GM18951 (cell line): ENCODE measurements at regions of chrX and their contacts with region 1.

Region 1: GRCh38 chrX:11770320-11770719 is 12.3 kb downstream of the MSL3 start:
- POLR2A ChIP-seq: peak; percentile 15

Region 2: DNA sequence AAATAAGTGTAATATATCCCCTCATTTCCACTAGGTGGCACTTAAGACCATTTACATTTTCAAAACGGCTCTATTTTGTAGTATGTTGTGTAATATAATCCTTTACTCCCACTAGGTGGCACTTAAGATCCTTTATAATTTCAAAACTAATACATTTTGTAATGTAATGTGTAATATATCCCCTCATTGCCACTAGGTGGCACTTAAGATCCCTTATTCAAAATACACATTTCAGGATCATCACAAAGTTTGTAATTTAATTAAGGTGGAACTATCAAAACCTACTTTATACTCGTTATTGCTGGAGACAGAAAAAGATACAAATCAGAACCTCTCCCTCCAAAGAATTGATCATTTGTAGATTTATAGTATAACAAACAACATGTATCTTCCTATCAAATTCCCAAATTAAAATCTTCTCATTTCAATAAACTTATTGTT is 237.1 kb before region 1 on chrX:
- in situ Hi-C with region 1: loop called (anchors 5 kb)
- POLR2A ChIP-seq: no peak

Region 3: DNA sequence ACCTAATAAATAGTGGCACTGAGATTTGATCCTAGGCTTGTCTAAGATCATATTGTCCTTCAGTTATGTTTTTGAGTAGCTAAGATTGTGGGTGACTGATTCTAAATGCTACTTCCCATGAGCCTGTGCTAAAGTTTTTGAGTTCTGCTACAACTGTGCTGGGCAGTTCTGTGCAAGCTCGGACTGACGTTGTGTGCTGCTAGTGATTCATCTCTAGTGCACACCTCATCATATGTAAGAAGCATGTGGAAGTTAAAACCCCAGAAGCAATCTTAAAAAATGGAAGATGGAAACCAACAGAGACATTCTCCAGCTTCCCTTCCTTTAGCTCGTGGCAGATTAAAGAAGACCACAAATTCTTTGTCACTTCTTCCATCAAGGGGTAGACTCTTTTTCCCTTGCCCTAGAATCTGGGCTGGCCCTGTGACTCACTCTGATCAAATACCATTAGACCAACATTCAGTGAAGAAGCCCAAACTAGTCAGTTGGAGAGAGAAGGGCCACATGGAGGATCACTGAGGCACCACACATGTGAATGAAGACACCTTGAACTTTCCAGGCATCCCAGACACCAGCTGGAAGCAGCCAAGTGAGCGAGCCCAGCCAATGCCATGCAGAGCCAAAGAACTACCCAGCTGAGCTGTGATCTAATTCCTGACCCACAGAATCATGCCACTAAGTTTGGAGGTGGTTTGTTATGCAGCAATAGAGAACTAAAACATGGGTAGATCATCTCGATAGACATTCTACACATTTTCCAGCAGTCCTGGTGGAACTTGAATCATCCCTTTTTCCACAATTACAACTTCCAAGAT is 121.4 kb before region 1 on chrX:
- in situ Hi-C with region 1: no loop called
- POLR2A ChIP-seq: no peak